Activated CD4-positive, alpha-beta memory T cell treated with anti-CD3 and anti-CD28 coated beads for 36 hours (primary cell): ENCODE measurements at regions of chr16 and their contacts with region 1.

Region 1: DNA sequence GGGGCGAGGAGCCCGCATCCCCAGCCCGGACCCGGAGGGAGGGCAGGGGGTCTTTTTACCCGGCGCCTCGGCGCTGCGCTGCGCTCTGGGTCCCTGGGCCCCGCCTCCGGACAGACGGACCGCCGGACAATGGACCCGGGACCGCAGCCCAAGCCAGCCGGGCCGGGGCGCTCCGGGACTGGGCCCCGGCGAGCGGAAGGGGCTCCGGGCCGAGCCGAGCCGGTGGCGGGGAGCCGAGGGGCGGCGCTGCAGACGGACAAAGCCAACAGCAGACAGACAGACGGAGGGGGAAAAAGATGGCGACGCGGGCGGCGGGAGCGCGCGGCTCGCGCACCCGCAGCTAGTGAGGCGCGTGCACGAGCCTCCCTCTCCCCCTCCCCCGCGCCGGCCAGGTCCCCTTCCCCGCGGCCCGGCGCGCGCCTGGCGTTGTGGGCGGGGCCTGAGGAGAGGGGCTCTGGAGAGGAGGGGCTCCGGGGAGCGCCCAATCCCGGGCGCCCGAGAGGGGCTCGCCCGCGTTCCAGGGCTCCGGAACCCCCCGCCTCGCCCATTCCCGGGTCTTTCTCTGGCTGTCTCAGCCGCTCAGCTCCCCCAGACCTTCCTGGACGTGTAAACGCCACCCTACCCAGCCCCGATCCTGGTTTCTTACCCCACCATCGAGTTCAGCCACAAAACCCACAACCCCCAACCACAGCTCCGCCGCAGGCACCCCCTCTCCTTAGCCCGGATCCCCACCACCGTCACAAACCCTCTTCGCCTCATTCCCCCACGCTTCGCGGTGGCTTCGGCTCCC is at the start of gene ZNF821:
- DNase-seq: peak; percentile 83
- H3K4me3 Mint-ChIP-seq: peak within 1 kb of the TSS; percentile 93
- H3K27ac Mint-ChIP-seq: peak within 1 kb of the TSS; percentile 90
- H3K4me1 Mint-ChIP-seq: peaks cover 45% of the 10 kb centered on the region
- H3K27me3 Mint-ChIP-seq: peaks cover 1% of the 10 kb centered on the region
- total RNA-seq, gene ZNF821: 6.8 to 7.3 TPM

Region 2: GRCh38 chr16:71723537-71724319 is 160.3 kb before region 1 on chr16:
- CTCF ChIA-PET with region 1: interaction called, 4 read pairs
- POLR2A ChIA-PET with region 1: interaction called, 5 read pairs
- intact Hi-C with region 1: loop called (anchors 2 kb)
- DNase-seq: peak; percentile 83
- H3K4me3 Mint-ChIP-seq: peak overlapping the region; percentile 76
- H3K27ac Mint-ChIP-seq: no peak overlapping the region
- H3K4me1 Mint-ChIP-seq: peaks cover 15% of the 10 kb centered on the region
- H3K27me3 Mint-ChIP-seq: peaks cover 7% of the 10 kb centered on the region

Region 3: GRCh38 chr16:71808593-71809459 is 75.2 kb before region 1 on chr16 and contains the start of gene AP1G1:
- CTCF ChIA-PET with region 1: interaction called, 30 read pairs
- POLR2A ChIA-PET with region 1: interaction called, 18 read pairs
- intact Hi-C with region 1: loop called (anchors 1 kb)
- DNase-seq: peak; percentile 96
- H3K4me3 Mint-ChIP-seq: peak within 1 kb of the TSS; percentile 90
- H3K27ac Mint-ChIP-seq: peak within 1 kb of the TSS; percentile 99
- H3K4me1 Mint-ChIP-seq: peaks cover 38% of the 10 kb centered on the region
- H3K27me3 Mint-ChIP-seq: no peaks in the 10 kb centered on the region
- total RNA-seq, gene AP1G1: 65.9 to 66.9 TPM

Region 4: DNA sequence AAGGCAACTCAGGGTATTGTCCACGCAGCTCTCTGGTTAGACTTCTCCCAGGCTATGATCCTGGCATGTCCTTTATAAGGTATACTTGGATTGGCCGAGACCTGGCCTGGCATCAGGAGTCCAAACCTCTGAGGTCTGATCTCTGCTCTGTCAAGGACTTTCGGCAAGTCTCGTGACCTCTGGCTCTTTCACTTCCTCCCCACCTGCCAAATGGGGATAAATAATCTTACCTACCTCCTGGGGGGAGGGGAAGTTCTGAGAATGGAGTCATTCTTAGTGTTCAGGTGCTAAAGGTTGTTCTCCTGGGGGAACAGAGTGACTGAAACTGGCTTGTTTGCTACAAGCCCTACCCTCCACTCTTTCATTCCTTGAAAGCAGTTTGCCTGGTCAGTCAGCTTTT is 30.6 kb before region 1 on chr16:
- CTCF ChIA-PET with region 1: interaction called, 34 read pairs
- POLR2A ChIA-PET with region 1: interaction called, 6 read pairs
- intact Hi-C with region 1: loop called (anchors 1 kb)
- DNase-seq: no peak
- H3K4me3 Mint-ChIP-seq: no peak overlapping the region
- H3K27ac Mint-ChIP-seq: peak overlapping the region; percentile 67
- H3K4me1 Mint-ChIP-seq: peaks cover 52% of the 10 kb centered on the region
- H3K27me3 Mint-ChIP-seq: no peaks in the 10 kb centered on the region

Region 5: DNA sequence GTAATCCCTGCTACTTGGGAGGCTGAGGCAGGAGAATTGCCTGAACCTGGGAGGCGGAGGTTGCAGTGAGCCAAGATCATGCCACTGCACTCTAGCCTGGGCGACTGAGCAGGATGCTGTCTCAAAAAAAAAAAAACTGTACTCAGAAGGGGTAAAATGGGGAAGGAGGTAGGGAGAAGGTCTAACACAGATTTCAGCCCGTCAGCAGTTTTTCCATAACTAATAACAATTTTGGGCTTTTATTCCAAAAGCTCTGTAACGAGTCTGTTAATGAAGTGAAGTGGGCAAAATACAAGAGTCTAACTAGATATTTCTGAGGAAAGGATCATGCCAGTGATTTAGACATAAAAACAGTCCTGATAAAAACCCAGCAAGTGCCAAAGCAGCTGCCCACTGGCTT is 10.8 kb before region 1 on chr16:
- CTCF ChIA-PET with region 1: interaction called, 32 read pairs
- POLR2A ChIA-PET with region 1: interaction called, 5 read pairs
- intact Hi-C with region 1: no loop called
- DNase-seq: no peak
- H3K4me3 Mint-ChIP-seq: no peak overlapping the region
- H3K27ac Mint-ChIP-seq: peak overlapping the region; percentile 28
- H3K4me1 Mint-ChIP-seq: peaks cover 30% of the 10 kb centered on the region
- H3K27me3 Mint-ChIP-seq: no peaks in the 10 kb centered on the region

Region 6: GRCh38 chr16:71961066-71962039 is 77.3 kb after region 1 on chr16:
- CTCF ChIA-PET with region 1: interaction called, 33 read pairs
- POLR2A ChIA-PET with region 1: no interaction called
- intact Hi-C with region 1: loop called (anchors 1 kb)
- DNase-seq: peak; percentile 90
- H3K4me3 Mint-ChIP-seq: no peak overlapping the region
- H3K27ac Mint-ChIP-seq: no peak overlapping the region
- H3K4me1 Mint-ChIP-seq: peaks cover 2% of the 10 kb centered on the region
- H3K27me3 Mint-ChIP-seq: no peaks in the 10 kb centered on the region

Region 7: DNA sequence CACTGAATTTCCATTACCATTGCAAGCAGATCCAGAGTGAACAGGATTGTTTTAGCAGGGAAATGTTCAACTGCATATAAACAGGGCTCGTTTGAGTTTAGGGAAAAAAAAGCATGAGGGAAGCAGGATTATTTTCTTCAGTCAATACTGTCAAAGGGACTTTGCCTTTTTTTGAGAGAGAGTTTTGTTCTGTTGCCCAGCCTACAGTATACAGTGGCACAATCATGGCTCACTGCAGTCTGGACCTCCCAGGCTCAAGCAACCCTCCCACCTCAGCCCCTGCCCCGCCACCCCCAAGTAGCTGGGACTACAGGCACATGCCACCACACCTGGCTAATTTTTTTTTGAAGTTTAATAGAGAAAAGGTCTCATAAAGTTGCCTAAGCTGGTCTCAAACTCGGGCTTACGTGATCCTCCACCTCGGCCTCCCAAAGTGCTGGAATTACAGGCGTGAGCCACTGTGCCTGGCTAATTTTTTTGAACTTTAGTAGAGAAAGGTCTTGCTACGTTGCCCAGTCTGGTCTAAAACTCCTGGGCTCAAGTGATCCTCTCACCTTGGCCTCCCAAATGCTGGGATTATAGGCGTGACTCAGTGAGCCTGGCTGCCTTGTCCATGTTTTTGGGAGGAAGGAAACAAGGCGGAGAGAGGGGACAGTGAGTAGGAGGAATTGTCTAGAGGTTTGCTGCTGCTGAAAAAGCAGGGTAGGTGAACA is 101.4 kb after region 1 on chr16:
- CTCF ChIA-PET with region 1: no interaction called
- POLR2A ChIA-PET with region 1: no interaction called
- intact Hi-C with region 1: no loop called
- DNase-seq: no peak
- H3K4me3 Mint-ChIP-seq: no peak overlapping the region
- H3K27ac Mint-ChIP-seq: no peak overlapping the region
- H3K4me1 Mint-ChIP-seq: no peaks in the 10 kb centered on the region
- H3K27me3 Mint-ChIP-seq: peaks cover 17% of the 10 kb centered on the region